A549 (cell line): ENCODE measurements at regions of chr17 and their contacts with region 1.

Region 1: GRCh38 chr17:39153599-39154051 is 2.2 kb upstream of the PLXDC1 start:
- DNase-seq: peak; percentile 90 to 94
- ATAC-seq: peak; percentile 65 to 69
- H3K4me3 ChIP-seq: peak overlapping the region; percentile 89
- H3K27ac ChIP-seq: peak overlapping the region; percentile 76 to 87
- H3K4me1 ChIP-seq: peaks cover 7% of the 10 kb centered on the region
- CTCF ChIP-seq: no peak; the same call in 2 of the 3 replicates
- EP300 ChIP-seq: no peak
- POLR2A ChIP-seq: no peak
- RAD21 ChIP-seq: no peak

Region 2: GRCh38 chr17:38752119-38752929 is 401.3 kb before region 1 on chr17 and contains the start of gene PSMB3:
- CTCF ChIA-PET with region 1: no interaction called
- POLR2A ChIA-PET with region 1: interaction called, 10 read pairs
- DNase-seq: peak; percentile 100
- ATAC-seq: peak; percentile 70 to 85
- H3K4me3 ChIP-seq: peak within 1 kb of the TSS; percentile 96
- H3K27ac ChIP-seq: peak within 1 kb of the TSS; percentile 90 to 98
- H3K4me1 ChIP-seq: peaks cover 22% of the 10 kb centered on the region
- CTCF ChIP-seq: no peak
- EP300 ChIP-seq: no peak
- POLR2A ChIP-seq: peak; percentile 64
- RAD21 ChIP-seq: no peak
- polyA plus RNA-seq, gene PSMB3: 417 and 467 TPM in 2 replicates

Region 3: GRCh38 chr17:38912221-38912813 is 241.3 kb before region 1 on chr17:
- CTCF ChIA-PET with region 1: interaction called, 17 read pairs
- POLR2A ChIA-PET with region 1: no interaction called
- DNase-seq: no peak
- ATAC-seq: no peak
- H3K4me3 ChIP-seq: no peak overlapping the region
- H3K27ac ChIP-seq: peak overlapping the region in 1 of 2 experiments; percentile 39; a peak in 1 of 6 replicates
- H3K4me1 ChIP-seq: peaks cover 34% of the 10 kb centered on the region
- CTCF ChIP-seq: no peak
- EP300 ChIP-seq: no peak
- POLR2A ChIP-seq: no peak
- RAD21 ChIP-seq: no peak

Region 4: GRCh38 chr17:38982858-38983746 is 170.5 kb before region 1 on chr17:
- CTCF ChIA-PET with region 1: interaction called, 319 read pairs
- POLR2A ChIA-PET with region 1: interaction called, 21 read pairs
- DNase-seq: peak; percentile 79
- ATAC-seq: peak; percentile 86 to 88; a peak in 5 of 6 replicates
- H3K4me3 ChIP-seq: no peak overlapping the region
- H3K27ac ChIP-seq: no peak overlapping the region
- H3K4me1 ChIP-seq: no peaks in the 10 kb centered on the region
- CTCF ChIP-seq: peak; percentile 97
- EP300 ChIP-seq: no peak
- POLR2A ChIP-seq: no peak
- RAD21 ChIP-seq: peak; percentile 94 to 96

Region 5: DNA sequence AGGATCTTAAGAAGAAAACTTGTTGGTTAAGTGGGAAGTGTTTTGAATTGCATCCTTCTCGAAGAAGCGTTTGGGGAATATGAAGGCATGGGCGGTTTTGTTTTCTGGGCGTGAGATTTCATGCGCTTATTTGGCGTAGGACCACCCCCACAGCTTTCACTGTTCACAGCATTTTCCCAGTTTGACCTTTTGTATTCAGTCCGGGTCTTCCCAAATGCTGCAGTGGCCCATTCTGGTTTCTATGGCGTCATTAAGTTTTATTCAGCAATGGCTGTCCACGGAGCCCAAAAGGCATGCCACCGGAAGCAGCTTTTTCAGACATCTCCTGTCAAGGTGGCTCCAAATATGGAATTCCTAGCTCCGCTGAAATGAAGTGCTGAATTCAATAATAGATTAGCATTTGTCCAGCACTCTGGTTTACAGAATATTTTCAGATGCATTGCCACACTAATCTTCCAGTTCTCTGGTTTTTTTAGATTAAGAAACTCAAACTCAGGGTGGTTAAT is 95.9 kb before region 1 on chr17:
- CTCF ChIA-PET with region 1: interaction called, 13 read pairs
- POLR2A ChIA-PET with region 1: no interaction called
- DNase-seq: no peak
- ATAC-seq: no peak
- H3K4me3 ChIP-seq: no peak overlapping the region; the same call in 1 of the 3 replicates
- H3K27ac ChIP-seq: peak overlapping the region in 1 of 2 experiments; percentile 89; a peak in 3 of 6 replicates
- H3K4me1 ChIP-seq: no peaks in the 10 kb centered on the region
- CTCF ChIP-seq: no peak
- EP300 ChIP-seq: no peak
- POLR2A ChIP-seq: no peak
- RAD21 ChIP-seq: no peak

Region 6: GRCh38 chr17:39123627-39124026 is 30.0 kb before region 1 on chr17:
- CTCF ChIA-PET with region 1: interaction called, 33 read pairs
- POLR2A ChIA-PET with region 1: interaction called, 3 read pairs
- DNase-seq: no peak
- ATAC-seq: no peak
- H3K4me3 ChIP-seq: no peak overlapping the region
- H3K27ac ChIP-seq: no peak overlapping the region
- H3K4me1 ChIP-seq: no peaks in the 10 kb centered on the region
- CTCF ChIP-seq: no peak
- EP300 ChIP-seq: no peak
- POLR2A ChIP-seq: no peak
- RAD21 ChIP-seq: no peak

Region 7: DNA sequence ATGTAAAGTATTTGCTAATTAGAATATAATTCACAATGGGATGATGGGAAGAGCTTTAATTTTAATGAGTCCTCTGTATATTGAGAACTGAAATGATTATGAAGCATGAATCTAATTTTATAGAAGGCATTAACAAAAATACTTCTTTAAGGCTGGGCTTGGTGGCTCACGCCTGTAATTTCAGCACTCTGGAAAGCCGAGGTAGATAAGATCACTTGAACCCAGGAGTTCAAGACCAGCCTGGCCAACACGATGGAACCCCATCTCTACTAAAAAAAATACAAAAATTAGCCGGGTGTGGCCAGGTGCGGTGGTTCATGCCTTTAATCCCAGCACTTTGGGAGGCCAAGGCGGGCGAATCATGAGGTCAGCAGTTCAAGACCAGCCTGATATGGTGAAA is 319.7 kb after region 1 on chr17:
- CTCF ChIA-PET with region 1: no interaction called
- POLR2A ChIA-PET with region 1: no interaction called
- DNase-seq: no peak
- ATAC-seq: no peak
- H3K4me3 ChIP-seq: no peak overlapping the region
- H3K27ac ChIP-seq: no peak overlapping the region
- H3K4me1 ChIP-seq: no peaks in the 10 kb centered on the region
- CTCF ChIP-seq: no peak
- EP300 ChIP-seq: no peak
- POLR2A ChIP-seq: no peak
- RAD21 ChIP-seq: no peak